ENCODE measurements at regions of chr4 and their contacts with region 1.

Region 1: DNA sequence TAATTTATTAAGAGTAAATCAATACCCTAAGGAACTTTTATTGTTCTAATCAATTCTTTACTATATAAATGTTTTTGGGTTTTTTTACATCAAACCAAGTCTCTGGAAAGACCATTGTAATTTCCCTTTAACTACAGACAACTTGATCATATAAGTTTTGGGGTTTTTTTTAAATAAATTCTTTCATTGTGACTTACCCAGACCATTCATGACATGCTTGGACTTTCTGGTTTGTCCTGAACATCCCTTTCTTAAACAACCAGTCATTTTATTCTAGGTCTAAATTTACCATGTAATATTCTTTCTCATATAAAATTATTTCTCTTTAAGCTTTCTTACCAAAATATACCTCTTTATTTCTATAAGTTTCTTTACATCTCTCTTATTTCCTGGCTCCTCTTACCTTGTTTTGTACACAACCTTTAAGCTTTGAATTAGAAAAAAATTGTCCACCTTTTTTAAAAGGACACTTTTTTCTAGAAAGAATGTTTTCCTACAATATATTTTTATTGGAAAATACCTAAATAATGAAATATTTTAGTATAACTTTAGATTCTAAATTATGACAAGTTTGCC is 8.4 kb downstream of the CNGA1 start:
- DNase-seq: no peak

Region 2: GRCh38 chr4:47624031-47624441 is 384.1 kb before region 1 on chr4:
- intact Hi-C with region 1: no loop called
- DNase-seq: no peak

Region 3: GRCh38 chr4:48085821-48086607 is 77.9 kb after region 1 on chr4:
- intact Hi-C with region 1: loop called (anchors 1 kb)
- DNase-seq: no peak

Region 4: DNA sequence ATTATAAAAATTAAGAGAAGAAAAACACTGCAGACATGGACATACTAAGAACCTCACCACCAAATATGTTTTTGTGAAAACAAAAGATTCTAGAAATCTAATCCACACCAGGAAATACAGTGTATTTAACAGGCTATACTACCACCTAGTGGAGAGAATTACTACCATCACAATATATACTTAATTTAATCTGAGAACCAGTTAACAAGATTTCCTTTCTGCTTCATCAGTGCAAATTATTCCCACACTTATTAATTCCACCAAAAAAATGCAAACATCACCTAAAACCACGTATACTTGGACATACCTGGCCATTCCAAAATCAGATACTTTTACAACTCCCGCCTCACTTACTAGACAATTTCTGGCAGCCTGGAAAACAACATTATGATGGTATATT is 132.9 kb after region 1 on chr4:
- intact Hi-C with region 1: loop called (anchors 10 kb)
- DNase-seq: no peak